ENCODE measurements at regions of chr6 and their contacts with region 1.

Region 1: DNA sequence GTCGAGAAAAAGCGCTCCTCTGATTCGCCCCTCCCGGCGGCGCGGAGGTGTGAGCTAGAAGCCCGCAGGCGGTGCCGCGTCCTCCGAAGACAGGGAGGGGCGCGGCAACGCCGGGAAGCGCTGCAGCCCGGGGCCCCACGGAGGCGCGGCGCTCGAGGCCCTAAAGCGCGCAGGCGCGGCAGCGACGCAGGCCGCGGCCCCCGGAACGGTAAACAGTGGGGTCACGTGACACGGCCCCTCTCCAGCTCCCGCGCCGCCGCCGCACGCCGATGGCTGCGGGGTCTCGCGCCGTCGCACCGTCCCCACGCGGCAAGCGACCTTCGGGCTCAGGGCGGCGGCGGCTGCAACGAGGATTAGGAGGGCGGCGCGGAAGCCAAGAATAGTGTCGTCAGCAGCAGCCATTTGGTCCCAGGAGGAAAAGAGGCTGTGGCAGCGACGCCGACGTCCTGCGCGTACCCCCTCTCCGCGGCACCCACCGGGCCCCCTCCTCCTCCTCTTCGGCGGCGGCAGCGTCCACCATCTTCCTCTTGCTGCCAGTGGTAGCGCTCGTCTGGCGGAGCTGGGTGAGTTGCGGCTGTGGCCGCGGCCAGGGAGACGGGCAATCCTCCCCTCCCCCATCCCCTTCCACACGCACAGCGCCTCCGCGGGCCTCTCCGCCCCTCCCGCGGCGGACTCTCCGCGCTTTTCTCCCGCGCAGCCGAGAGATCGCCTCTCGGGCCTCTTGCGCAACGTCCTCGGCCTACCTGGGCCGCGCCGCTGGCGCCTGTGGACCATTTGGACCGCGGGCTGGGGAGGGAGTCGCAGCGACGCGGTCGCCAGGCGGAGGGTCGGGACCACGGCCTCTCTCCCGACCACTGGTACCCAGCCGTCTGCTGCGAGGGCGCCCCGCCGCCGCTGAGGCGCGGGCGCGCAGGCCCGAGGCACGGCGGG is at the start of gene PHF3:
- DNase-seq: peak; percentile 80 to 93 (median 90)
- H3K4me3 ChIP-seq: peak within 1 kb of the TSS; percentile 56 to 99 (median 90)
- H3K27ac ChIP-seq: peak within 1 kb of the TSS; percentile 89 to 100 (median 98)
- H3K27me3 ChIP-seq: no peaks in the 10 kb centered on the region
- CTCF ChIP-seq: peak in 40 of 56 donors; percentile 11 to 53 (median 28)
- total RNA-seq, gene PHF3: 56.6 to 92.2 (median 71.1) TPM

Region 2: GRCh38 chr6:63352587-63353285 is 283.1 kb before region 1 on chr6:
- intact Hi-C with region 1: loop called in 1 of 2 experiments (anchors 5 kb)
- DNase-seq: no peak
- H3K4me3 ChIP-seq: peak overlapping the region in 2 of 59 donors; percentile 21 to 34
- H3K27ac ChIP-seq: peak overlapping the region in 2 of 59 donors; percentile 43 to 53
- H3K27me3 ChIP-seq: no peaks in the 10 kb centered on the region
- CTCF ChIP-seq: peak in 53 of 56 donors; percentile 25 to 70 (median 51)

Region 3: GRCh38 chr6:63571881-63572732 is 63.7 kb before region 1 on chr6 and contains the starts of genes LOC128125822 and PTP4A1:
- intact Hi-C with region 1: loop called (anchors 1 to 2 kb)
- DNase-seq: peak; percentile 98 to 99 (median 98)
- H3K4me3 ChIP-seq: peak within 1 kb of the TSS; percentile 65 to 100 (median 90)
- H3K27ac ChIP-seq: peak within 1 kb of the TSS; percentile 79 to 100 (median 98)
- H3K27me3 ChIP-seq: no peaks in the 10 kb centered on the region
- CTCF ChIP-seq: peak in 10 of 56 donors; percentile 5 to 33 (median 15)
- total RNA-seq, gene PTP4A1: 17.6 to 85.2 (median 40.6) TPM

Region 4: DNA sequence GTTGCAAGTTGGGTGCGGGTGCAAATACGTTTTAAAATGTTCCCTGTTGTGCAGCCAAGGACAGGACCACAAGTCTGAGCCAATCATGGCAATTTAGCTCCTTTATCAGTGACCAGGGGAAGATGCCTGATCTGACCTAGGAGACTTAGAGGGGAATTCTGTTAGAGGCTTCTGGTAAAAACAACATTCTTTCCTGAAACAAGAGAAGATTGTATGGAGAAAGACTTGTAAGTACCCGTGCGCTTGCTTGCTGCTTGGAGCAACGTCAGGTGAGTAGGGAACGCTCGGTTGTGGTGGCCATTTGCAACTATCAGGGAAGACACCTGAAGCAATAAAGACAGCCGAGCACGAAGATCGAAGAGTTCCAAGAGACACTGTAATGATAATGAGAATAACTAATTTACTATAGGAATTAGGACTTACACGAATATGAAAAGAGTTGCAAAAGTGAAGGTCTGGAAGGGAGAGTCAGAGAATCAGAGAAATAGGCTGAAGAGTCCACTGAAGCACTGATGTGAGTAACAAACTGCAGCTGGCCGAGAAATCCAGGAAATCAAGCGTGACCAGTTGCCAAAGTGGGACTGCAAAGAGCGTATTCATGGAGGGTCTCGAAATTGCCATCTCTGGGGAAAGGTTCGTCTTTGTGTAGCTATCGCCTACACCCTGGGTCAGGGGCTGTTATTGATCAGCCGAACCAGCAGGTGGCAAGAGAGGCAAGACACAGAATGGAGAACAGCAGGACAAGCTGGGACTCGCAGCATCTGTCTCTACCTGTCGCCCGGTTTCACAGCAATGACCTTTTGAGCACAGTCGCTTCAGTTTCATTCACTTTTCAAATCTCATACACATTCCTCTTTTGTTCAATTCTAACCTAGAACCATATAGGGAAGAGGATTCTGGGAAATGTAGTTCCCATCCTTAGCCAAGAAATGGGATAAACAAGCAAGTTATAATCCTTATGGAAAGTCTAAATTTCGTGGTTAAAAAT is 37.5 kb before region 1 on chr6:
- intact Hi-C with region 1: loop called (anchors 2 to 5 kb)
- DNase-seq: peak; percentile 48 to 80 (median 69)
- H3K4me3 ChIP-seq: peak overlapping the region; percentile 46 to 85 (median 66)
- H3K27ac ChIP-seq: peak overlapping the region in 58 of 59 donors; percentile 5 to 85 (median 68)
- H3K27me3 ChIP-seq: no peaks in the 10 kb centered on the region
- CTCF ChIP-seq: peak; percentile 45 to 93 (median 86)

Region 5: DNA sequence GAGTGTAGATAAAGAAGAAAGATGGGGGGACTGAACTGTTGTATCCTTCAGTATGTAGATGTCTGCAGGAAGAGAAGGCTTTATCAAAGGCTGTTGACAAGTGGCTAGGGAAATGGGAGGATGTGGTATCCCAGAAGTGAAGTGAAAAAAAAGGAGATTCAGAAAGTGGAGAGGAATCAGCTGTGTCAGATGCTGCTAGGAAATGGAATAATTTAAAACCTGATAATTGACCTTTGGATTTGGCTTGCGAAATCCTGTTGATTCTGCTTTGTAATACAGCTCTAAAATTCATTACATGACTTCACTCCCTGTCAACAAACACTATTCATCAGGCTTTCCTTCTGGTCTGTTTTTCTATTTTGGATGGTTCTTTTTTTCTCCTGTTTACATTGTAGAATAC is 41.4 kb after region 1 on chr6:
- intact Hi-C with region 1: loop called in 1 of 2 experiments (anchors 5 kb)
- DNase-seq: no peak
- H3K4me3 ChIP-seq: no peak overlapping the region
- H3K27ac ChIP-seq: peak overlapping the region in 38 of 59 donors; percentile 0 to 80 (median 44)
- H3K27me3 ChIP-seq: no peaks in the 10 kb centered on the region
- CTCF ChIP-seq: no peak

Region 6: DNA sequence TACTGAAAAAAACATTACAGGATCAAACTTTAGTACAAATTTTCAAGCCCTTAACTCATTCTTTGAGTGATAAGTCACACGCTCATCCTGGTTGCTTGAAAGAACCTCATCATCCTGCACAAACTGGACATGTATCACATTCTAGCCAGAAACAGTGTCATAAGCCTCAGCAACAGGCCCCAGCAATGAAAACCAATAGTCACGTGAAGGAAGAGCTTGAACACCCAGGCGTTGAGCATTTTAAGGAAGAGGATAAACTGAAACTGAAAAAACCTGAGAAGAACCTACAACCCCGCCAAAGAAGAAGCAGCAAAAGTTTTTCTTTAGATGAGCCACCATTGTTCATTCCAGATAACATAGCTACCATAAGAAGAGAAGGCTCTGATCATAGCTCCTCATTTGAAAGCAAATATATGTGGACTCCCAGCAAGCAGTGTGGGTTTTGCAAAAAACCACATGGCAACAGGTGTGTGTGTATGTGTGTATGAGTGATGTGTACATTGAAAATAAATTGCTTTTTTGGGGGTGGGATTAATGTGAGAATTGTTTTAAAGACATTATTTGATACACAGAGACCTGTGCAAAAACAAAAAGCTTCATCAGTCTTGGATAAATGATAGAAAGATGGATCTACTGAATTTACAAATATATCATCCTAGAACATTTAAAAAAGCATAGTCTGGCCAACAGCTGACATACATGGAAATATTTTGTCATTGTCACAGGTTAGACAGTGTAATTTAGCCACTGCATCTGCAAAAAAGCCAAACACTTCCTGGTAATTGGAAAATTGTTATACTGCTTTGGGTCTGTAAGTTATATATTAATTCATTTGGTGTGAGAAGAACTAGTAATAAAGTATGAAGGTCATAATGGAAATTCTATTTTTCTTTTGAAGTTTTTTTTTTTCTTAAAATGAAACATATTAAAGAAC is 49.9 kb after region 1 on chr6:
- intact Hi-C with region 1: loop called in 1 of 2 experiments (anchors 5 kb)
- DNase-seq: no peak
- H3K4me3 ChIP-seq: no peak overlapping the region
- H3K27ac ChIP-seq: peak overlapping the region in 4 of 59 donors; percentile 4 to 13 (median 8)
- H3K27me3 ChIP-seq: no peaks in the 10 kb centered on the region
- CTCF ChIP-seq: no peak

Region 7: GRCh38 chr6:63705707-63706106 is 69.9 kb after region 1 on chr6:
- intact Hi-C with region 1: no loop called
- DNase-seq: no peak
- H3K4me3 ChIP-seq: no peak overlapping the region
- H3K27ac ChIP-seq: no peak overlapping the region
- H3K27me3 ChIP-seq: no peaks in the 10 kb centered on the region
- CTCF ChIP-seq: no peak

Region 8: DNA sequence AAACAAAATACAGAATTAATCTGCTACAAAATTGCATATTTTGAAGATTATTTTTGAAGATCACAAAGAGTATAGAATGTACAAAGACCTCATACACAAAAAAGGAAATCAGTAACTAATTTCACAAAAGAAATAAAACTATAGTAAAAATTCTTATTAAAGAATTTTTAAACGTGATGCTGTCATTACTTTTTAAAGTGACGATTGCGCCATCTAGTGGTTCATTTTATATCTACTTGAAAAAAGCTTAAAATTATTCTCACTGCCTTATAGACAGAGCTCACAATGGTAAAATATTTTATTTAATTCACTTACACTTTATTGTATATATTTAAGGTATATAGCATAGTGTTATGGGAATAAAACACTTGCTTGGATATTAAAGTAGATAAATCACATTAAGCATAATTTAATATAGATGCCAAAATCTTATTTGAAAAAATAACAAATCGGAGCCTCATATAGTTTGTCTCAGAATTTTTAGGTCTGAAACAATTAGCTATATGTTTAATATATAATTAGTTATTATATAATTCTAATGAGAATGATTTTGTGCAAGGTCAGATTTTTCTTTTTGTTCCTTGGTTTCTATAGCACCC is 128.6 kb after region 1 on chr6:
- intact Hi-C with region 1: loop called (anchors 10 kb)
- DNase-seq: no peak
- H3K4me3 ChIP-seq: no peak overlapping the region
- H3K27ac ChIP-seq: no peak overlapping the region
- H3K27me3 ChIP-seq: no peaks in the 10 kb centered on the region
- CTCF ChIP-seq: peak; percentile 55 to 94 (median 82)

Measured in dorsolateral prefrontal cortex (tissue), 120 donors.